ENCODE measurements at regions of chr15 and their contacts with region 1.

Region 1: GRCh38 chr15:33086507-33087121 is 107.9 kb downstream of the FMN1 start:
- DNase-seq: peak in 1 of 2 experiments; percentile 51
- H3K4me3 ChIP-seq: no peak overlapping the region
- H3K27ac ChIP-seq: no peak overlapping the region
- H3K4me1 ChIP-seq: peaks cover 42% of the 10 kb centered on the region
- H3K27me3 ChIP-seq: no peaks in the 10 kb centered on the region
- CTCF ChIP-seq: peak; percentile 64

Region 2: GRCh38 chr15:33021806-33022389 is 64.7 kb before region 1 on chr15:
- CTCF ChIA-PET with region 1: interaction called, 3 read pairs
- POLR2A ChIA-PET with region 1: interaction called, 3 read pairs
- intact Hi-C with region 1: loop called (anchors 1 kb)
- DNase-seq: no peak
- H3K4me3 ChIP-seq: no peak overlapping the region
- H3K27ac ChIP-seq: peak overlapping the region; percentile 43
- H3K4me1 ChIP-seq: peaks cover 13% of the 10 kb centered on the region
- H3K27me3 ChIP-seq: no peaks in the 10 kb centered on the region
- CTCF ChIP-seq: peak; percentile 66

Region 3: DNA sequence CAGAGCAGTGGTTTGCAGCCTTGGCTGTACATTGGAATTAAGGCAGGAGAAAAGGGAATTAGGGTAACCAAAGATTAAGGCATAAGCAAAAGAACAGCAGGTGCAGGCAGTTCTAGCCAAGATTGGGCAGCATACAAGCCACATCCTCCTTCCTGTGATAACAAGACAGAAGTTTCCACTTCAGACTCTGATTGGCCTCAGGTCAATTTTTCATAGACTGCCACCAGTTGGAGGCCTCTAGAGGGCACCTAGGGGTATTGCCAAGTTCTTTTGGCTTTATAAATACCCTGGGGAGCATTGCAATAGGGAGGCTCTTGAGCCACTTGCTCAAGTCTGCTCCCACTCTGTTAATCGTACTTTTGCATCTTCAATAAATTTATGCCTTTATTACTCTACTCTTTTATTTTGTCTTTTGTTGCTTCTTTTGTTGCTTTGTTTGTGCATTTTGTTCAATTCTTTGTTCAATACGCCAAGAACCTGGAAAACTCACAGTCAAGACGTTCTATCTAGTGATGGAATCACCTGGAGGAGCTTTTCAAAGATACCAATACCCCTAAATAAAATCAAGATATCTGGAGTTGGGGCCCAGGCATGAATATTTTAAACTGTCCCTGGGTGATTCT is 140.1 kb after region 1 on chr15:
- CTCF ChIA-PET with region 1: interaction called, 14 read pairs
- POLR2A ChIA-PET with region 1: no interaction called
- intact Hi-C with region 1: no loop called
- DNase-seq: peak in 1 of 2 experiments; percentile 11
- H3K4me3 ChIP-seq: no peak overlapping the region
- H3K27ac ChIP-seq: no peak overlapping the region
- H3K4me1 ChIP-seq: no peaks in the 10 kb centered on the region
- H3K27me3 ChIP-seq: no peaks in the 10 kb centered on the region
- CTCF ChIP-seq: peak; percentile 51

Region 4: GRCh38 chr15:33234014-33234461 is 147.4 kb after region 1 on chr15:
- CTCF ChIA-PET with region 1: no interaction called
- POLR2A ChIA-PET with region 1: no interaction called
- intact Hi-C with region 1: loop called (anchors 1 kb)
- DNase-seq: peak; percentile 20 to 46
- H3K4me3 ChIP-seq: no peak overlapping the region
- H3K27ac ChIP-seq: no peak overlapping the region
- H3K4me1 ChIP-seq: peaks cover 13% of the 10 kb centered on the region
- H3K27me3 ChIP-seq: no peaks in the 10 kb centered on the region
- CTCF ChIP-seq: peak; percentile 72

Region 5: GRCh38 chr15:33700695-33701304 is 614.2 kb after region 1 on chr15:
- CTCF ChIA-PET with region 1: interaction called, 3 read pairs
- POLR2A ChIA-PET with region 1: no interaction called
- intact Hi-C with region 1: loop called (anchors 10 kb)
- DNase-seq: peak in 1 of 2 experiments; percentile 68
- H3K4me3 ChIP-seq: no peak overlapping the region
- H3K27ac ChIP-seq: no peak overlapping the region
- H3K4me1 ChIP-seq: no peaks in the 10 kb centered on the region
- H3K27me3 ChIP-seq: no peaks in the 10 kb centered on the region
- CTCF ChIP-seq: peak; percentile 85